KBM-7 (cell line): ENCODE measurements at regions of chr2 and their contacts with region 1.

Region 1: DNA sequence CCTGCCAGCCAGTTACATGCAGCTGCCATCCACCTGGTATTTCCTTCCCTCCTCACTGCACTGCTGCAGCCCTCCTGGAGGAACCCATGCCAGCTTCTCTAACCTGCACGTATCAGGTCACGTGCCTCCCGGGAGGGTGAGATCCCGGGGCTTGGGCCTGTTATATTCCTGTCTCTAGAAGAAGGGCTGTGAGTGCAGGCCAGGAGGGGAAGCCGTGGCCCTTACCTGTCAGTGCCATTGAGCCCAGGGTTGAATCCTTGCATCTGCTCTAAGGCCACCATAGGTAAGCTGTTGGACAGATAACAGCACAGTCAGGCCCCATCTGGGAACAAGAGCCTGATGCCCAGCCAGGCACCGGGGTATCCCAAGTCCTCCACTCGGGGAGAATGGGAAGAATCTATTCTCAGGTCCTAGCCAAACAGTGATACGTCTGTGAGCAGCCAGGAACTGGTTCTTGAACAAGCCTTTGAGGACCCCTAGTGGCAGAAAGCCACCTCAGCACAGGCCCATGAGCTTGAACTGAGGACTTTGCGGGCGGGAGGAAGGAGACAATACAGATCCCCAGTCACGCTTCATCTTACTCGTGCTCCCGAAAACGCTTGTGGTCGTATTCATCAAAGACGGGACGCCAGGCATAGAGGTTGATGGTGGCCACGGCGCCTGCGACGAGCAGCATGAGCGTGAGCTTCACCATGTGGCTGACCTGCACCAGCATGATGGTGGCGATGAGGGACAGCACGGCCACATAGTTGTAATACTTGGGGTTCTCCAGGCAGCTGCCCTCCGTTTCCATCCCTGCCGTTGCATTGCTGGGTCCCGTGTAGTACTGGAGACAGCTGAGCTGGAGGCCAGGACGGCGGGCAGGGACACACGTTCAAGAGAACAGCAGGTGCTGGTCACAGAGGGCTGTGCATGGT is 34.4 kb downstream of the CENPO start:
- DNase-seq: peak; percentile 77

Region 2: DNA sequence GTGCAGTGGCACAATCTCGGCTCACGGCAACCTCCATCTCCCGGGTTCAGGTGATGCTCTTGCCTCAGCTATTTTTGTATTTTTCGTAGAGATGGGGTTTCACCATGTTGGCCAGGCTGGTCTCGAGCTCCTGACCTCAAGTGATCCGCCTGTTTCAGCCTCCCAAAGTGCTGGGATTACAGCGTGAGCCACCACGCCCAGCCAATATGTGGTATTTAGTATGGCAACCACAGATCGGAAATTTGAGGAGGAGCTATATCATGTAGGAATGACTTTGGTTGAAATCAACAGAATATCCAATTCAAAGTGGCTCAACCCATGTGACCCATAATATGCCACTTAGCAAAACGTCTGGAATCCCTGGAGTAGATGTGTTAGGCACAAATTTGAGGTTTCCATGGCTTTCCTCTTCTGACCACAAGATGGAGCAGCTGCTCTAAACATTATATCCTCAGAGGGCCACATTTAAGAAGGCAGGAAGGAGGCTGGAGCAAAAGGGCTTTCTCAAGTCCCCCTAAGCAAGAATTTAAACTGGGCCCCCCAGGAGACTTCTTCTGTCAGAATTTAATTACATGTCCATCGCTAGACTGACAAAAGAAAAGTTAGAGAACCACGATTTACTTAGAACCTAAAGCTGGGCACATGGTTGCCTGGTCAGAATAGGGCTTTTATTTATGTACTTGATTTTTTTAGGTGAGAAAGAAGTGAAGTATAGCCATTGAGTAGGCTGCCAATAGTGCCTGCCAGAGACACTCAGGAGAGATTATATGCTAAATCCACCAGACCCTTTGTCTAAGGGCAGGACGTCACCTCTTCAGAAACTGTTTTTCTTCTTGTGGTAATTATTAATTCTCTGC is 417.7 kb before region 1 on chr2:
- in situ Hi-C with region 1: loop called (anchors 25 kb)
- DNase-seq: peak; percentile 81